Breast epithelium (tissue), 4 donors: ENCODE measurements at regions of chrX and their contacts with region 1.

Region 1: GRCh38 chrX:143094417-143095110 is 68.8 kb downstream of the SPANXN4 start:
- DNase-seq: no peak
- H3K4me3 ChIP-seq: no peak overlapping the region
- H3K27ac ChIP-seq: no peak overlapping the region
- H3K4me1 ChIP-seq: no peaks in the 10 kb centered on the region
- H3K27me3 ChIP-seq: peaks cover 0 to 4% of the 10 kb centered on the region in 2 donors
- CTCF ChIP-seq: no peak
- POLR2A ChIP-seq: no peak

Region 2: DNA sequence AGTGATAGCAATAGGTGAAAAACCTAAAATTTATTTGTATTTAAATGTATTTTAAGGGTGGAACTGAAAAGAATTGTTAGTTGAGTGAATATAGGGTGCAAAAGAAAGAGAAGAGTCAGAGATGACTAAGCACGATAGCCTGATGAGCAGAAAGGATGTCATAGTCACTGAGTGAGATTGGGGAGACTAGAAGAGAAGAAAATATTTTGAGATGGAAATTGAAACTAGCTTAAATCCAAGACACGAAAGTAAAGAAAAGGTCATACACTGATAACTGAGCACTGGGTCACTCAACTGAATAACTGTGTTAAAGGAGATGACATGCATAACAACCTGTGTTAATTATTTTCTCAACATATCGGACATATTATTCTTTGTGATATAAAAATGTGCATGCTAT is 13.3 kb before region 1 on chrX:
- intact Hi-C with region 1: loop called (anchors 1 kb)
- DNase-seq: no peak
- H3K4me3 ChIP-seq: no peak overlapping the region
- H3K27ac ChIP-seq: no peak overlapping the region
- H3K4me1 ChIP-seq: no peaks in the 10 kb centered on the region
- H3K27me3 ChIP-seq: no peaks in the 10 kb centered on the region
- CTCF ChIP-seq: no peak
- POLR2A ChIP-seq: no peak